ENCODE measurements at regions of chr4 and their contacts with region 1.

Region 1: DNA sequence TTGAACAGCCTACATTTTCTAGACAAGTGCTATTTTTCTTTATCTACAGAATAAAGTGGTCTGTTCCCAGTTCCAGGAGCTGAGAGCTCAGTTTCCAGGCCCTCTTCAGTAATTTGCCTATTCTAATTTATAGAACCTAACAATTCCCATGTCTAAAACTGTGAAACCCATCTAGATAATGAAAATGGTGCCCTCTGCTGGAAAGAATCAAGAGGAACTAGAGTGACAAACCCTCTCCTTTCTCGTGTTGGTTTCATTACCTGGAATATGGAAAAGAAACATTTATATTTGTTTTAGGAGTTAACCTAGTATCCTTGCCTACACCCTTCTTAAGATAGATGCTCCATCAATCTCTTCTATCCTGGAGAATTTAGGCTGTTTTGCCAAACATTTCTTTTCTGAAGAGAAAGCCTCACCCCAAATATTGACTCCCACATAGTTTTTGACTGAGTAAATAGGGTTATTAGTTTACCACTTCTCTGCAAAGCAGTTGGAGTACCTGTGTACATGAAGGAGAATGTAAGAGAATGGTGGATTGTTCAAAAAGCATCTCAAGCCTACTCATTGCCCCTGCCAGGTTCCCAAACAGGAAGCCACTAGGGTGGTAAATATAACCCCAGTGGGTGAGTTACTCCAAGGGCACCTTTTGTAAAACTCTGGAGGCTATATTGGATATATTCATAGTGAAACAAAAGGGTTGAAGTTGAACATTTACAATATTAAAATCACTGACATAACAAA is 121.6 kb downstream of the RASL11B start:
- DNase-seq: peak; percentile 48 to 67 (median 54)
- ATAC-seq: peak; percentile 92
- H3K4me3 ChIP-seq: no peak overlapping the region
- H3K27ac ChIP-seq: no peak overlapping the region
- H3K4me1 ChIP-seq: no peaks in the 10 kb centered on the region
- H3K27me3 ChIP-seq: no peaks in the 10 kb centered on the region
- CTCF ChIP-seq: peak; percentile 52 to 70 (median 55); a peak in 5 of 6 replicates
- EP300 ChIP-seq: no peak
- POLR2A ChIP-seq: no peak
- RAD21 ChIP-seq: peak; percentile 68

Region 2: GRCh38 chr4:52234561-52235440 is 748.9 kb before region 1 on chr4:
- CTCF ChIA-PET with region 1: interaction called, 3 read pairs
- POLR2A ChIA-PET with region 1: no interaction called
- in situ Hi-C with region 1: no loop called
- intact Hi-C with region 1: loop called (anchors 2 kb)
- DNase-seq: peak in 2 of 4 experiments; percentile 6
- ATAC-seq: peak; percentile 36; the same call in 1 of the 3 replicates
- H3K4me3 ChIP-seq: no peak overlapping the region
- H3K27ac ChIP-seq: no peak overlapping the region
- H3K4me1 ChIP-seq: no peaks in the 10 kb centered on the region
- H3K27me3 ChIP-seq: no peaks in the 10 kb centered on the region
- CTCF ChIP-seq: peak in 2 of 3 experiments; percentile 25 to 38; a peak in 3 of 6 replicates
- EP300 ChIP-seq: no peak
- POLR2A ChIP-seq: no peak
- RAD21 ChIP-seq: peak; percentile 17 to 49; a peak in 3 of 4 replicates

Region 3: DNA sequence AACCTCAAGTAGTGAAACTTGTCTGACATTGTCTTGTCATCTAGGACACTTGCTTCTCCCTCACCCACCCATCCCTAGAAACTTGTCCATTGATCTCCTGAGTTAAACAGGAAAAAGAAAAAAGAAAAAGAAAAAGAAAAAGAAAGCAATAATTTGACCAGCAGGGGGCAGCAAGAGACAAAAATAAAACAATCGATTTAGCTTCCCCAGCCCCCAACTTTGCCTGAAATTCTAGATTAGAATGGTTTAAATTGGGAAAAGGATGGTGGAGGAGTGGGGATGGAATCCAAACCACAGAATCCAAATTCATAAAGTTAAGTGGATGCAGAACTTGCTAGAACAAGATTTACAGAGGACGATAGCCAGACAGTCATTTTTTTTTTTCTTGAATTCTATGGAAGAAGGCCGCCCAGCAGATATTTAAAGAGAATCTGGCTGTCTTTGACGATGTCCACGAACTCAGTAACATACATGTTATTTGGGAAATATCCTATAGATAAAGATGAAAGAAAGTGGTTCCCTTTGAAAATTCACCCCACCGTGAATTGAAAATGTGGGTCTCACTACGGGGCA is 607.5 kb before region 1 on chr4:
- CTCF ChIA-PET with region 1: interaction called, 30 read pairs
- POLR2A ChIA-PET with region 1: no interaction called
- in situ Hi-C with region 1: loop called (anchors 10 kb)
- intact Hi-C with region 1: loop called (anchors 1 kb)
- DNase-seq: peak; percentile 23 to 57 (median 32)
- ATAC-seq: no peak
- H3K4me3 ChIP-seq: no peak overlapping the region
- H3K27ac ChIP-seq: no peak overlapping the region
- H3K4me1 ChIP-seq: no peaks in the 10 kb centered on the region
- H3K27me3 ChIP-seq: no peaks in the 10 kb centered on the region; a peak in 2 of 5 replicates
- CTCF ChIP-seq: peak; percentile 31 to 66 (median 57); a peak in 5 of 6 replicates
- EP300 ChIP-seq: no peak
- POLR2A ChIP-seq: no peak
- RAD21 ChIP-seq: peak; percentile 60 to 66

Region 4: DNA sequence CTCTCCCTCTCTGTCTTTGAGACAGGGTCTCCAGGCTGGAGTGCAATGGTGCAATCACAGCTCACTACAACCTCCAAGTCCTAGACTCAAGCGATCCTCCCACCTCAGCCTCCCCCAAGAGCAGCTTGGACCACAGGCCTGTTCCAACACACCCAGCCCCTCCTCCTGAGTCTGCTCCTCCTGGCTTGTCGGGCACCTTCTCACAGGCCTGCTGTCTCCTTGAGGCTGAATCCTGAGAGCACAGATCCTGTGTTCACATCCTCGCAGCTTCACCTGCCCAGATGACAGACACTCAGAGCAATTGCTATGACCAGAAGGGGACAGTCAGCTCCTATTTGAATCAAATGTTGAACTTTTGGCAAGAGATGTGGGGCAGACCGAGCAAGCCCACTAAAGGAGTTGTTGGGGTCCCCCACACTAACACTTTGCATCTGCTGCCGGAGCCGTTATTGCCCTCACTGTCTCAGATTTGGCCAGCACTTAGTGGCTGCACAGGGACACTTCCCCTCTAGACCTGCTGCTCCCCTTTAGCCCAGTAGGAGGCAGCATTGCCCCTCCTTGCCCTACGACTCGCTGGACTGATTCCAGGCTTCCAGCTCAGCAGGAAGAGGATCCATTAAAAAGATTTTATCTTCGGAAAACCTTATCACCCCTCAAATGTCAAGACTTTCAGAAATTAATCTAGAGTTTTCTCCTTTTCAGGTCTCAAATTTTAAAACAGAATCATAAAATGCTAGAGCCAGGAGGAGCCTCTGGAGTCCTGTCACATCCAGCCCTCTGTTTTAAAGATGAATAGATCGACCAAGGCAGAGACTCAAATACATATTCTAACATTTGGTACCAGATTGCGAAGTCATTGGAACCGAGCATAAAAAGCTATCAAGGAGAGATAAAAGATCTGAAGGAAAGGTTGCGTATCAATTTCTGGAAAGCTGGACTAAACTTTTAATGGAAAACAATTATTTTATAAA is 438.3 kb before region 1 on chr4:
- CTCF ChIA-PET with region 1: interaction called, 58 read pairs
- POLR2A ChIA-PET with region 1: no interaction called
- in situ Hi-C with region 1: loop called (anchors 5 kb)
- intact Hi-C with region 1: loop called (anchors 2 kb)
- DNase-seq: peak; percentile 74 to 77 (median 76)
- ATAC-seq: peak; percentile 98
- H3K4me3 ChIP-seq: no peak overlapping the region
- H3K27ac ChIP-seq: no peak overlapping the region
- H3K4me1 ChIP-seq: no peaks in the 10 kb centered on the region; a peak in 1 of 5 replicates
- H3K27me3 ChIP-seq: peaks cover 2 to 4% of the 10 kb centered on the region in 2 experiments; a peak in 1 of 5 replicates
- CTCF ChIP-seq: peak; percentile 84 to 94 (median 92)
- EP300 ChIP-seq: no peak
- POLR2A ChIP-seq: no peak
- RAD21 ChIP-seq: peak; percentile 90 to 95

Region 5: DNA sequence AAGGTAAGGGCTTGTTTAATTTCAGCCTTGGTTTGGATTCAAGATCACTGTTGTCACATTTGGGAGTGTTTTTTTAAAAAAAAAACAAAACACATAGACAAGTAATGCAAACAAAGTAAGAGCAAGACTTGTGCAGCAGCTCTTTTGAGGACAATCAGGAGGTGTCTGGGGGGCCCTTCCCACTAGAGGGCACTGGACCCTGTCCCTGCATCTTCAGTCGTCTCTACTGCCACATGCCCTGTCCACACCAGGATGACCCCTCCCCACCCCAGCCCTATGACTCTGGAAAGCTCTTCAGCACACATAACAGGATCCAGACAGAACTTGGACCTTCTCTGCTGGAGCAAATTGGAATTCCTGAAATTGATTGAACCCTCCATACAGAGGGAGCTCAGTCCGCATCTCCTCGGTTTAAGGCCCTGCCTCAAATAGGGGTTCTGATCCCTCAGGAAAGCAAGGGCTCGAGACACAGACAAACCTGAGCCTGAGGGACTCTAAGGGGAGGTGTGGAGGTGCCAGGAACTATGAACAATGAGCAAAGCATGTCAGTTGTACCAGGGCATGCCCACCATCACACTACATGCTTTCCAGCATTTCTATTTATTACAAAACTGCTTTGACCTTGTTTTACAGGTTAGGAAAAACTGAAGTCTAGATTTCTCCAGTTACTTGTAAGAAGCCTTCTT is 395.5 kb before region 1 on chr4:
- CTCF ChIA-PET with region 1: interaction called, 5 read pairs
- POLR2A ChIA-PET with region 1: interaction called, 3 read pairs
- in situ Hi-C with region 1: no loop called
- intact Hi-C with region 1: loop called (anchors 2 kb)
- DNase-seq: peak; percentile 40 to 66 (median 52)
- ATAC-seq: peak; percentile 90
- H3K4me3 ChIP-seq: no peak overlapping the region
- H3K27ac ChIP-seq: no peak overlapping the region
- H3K4me1 ChIP-seq: no peaks in the 10 kb centered on the region; a peak in 2 of 5 replicates
- H3K27me3 ChIP-seq: no peaks in the 10 kb centered on the region; a peak in 1 of 5 replicates
- CTCF ChIP-seq: peak; percentile 59 to 71 (median 62)
- EP300 ChIP-seq: no peak
- POLR2A ChIP-seq: no peak
- RAD21 ChIP-seq: peak in 1 of 2 experiments; percentile 56; a peak in 2 of 4 replicates

Region 6: GRCh38 chr4:52799813-52800212 is 183.9 kb before region 1 on chr4:
- CTCF ChIA-PET with region 1: no interaction called
- POLR2A ChIA-PET with region 1: no interaction called
- in situ Hi-C with region 1: no loop called
- intact Hi-C with region 1: loop called (anchors 10 kb)
- DNase-seq: peak in 1 of 4 experiments; percentile 29
- ATAC-seq: peak; percentile 87
- H3K4me3 ChIP-seq: no peak overlapping the region
- H3K27ac ChIP-seq: no peak overlapping the region
- H3K4me1 ChIP-seq: no peaks in the 10 kb centered on the region
- H3K27me3 ChIP-seq: peaks cover 3 to 10% of the 10 kb centered on the region in 2 experiments; a peak in 3 of 5 replicates
- CTCF ChIP-seq: no peak
- EP300 ChIP-seq: no peak
- POLR2A ChIP-seq: no peak
- RAD21 ChIP-seq: no peak

Region 7: GRCh38 chr4:52911684-52912294 is 71.9 kb before region 1 on chr4:
- CTCF ChIA-PET with region 1: no interaction called
- POLR2A ChIA-PET with region 1: no interaction called
- in situ Hi-C with region 1: no loop called
- intact Hi-C with region 1: loop called (anchors 5 kb)
- DNase-seq: peak; percentile 64 to 83 (median 76)
- ATAC-seq: peak; percentile 94
- H3K4me3 ChIP-seq: no peak overlapping the region
- H3K27ac ChIP-seq: no peak overlapping the region
- H3K4me1 ChIP-seq: no peaks in the 10 kb centered on the region
- H3K27me3 ChIP-seq: no peaks in the 10 kb centered on the region
- CTCF ChIP-seq: peak; percentile 73 to 87 (median 75)
- EP300 ChIP-seq: no peak
- POLR2A ChIP-seq: no peak
- RAD21 ChIP-seq: peak in 1 of 2 experiments; percentile 45; a peak in 2 of 4 replicates

Measured in K562 (cell line).